ENCODE measurements at regions of chr9 and their contacts with region 1.

Region 1: DNA sequence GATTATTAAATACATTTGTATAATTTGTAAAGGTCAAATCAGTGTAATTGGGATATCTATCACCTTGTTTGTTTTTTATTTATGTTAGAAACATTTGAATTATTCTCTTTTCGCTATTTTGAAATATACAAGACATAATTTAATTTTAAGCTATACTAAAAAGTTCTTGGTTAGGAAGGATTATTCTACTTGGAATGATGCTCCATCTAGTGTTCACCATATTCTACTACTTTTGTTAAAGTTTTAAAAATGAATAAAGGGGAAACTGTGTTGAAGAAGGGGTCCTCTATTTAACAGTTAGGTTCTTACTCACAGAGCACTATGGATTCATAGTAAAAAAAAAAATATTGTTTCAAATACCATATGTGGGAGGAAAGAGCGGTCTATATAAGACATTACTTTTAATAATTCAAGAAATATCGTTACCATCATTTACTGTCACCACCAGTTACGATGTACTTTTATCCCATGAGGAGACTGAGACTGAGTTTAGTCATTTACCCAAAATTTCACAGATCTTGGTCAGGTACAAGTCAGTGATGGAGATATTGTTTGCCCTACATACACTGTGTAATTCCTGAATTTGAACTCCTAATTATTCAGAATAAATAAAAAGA is 6.3 kb upstream of the STOM start:
- DNase-seq: peak; percentile 34
- ATAC-seq: no peak
- H3K4me3 ChIP-seq: no peak overlapping the region
- H3K27ac ChIP-seq: no peak overlapping the region
- H3K4me1 ChIP-seq: peaks cover 38% of the 10 kb centered on the region
- H3K27me3 ChIP-seq: no peaks in the 10 kb centered on the region
- CTCF ChIP-seq: peak; percentile 66

Region 2: DNA sequence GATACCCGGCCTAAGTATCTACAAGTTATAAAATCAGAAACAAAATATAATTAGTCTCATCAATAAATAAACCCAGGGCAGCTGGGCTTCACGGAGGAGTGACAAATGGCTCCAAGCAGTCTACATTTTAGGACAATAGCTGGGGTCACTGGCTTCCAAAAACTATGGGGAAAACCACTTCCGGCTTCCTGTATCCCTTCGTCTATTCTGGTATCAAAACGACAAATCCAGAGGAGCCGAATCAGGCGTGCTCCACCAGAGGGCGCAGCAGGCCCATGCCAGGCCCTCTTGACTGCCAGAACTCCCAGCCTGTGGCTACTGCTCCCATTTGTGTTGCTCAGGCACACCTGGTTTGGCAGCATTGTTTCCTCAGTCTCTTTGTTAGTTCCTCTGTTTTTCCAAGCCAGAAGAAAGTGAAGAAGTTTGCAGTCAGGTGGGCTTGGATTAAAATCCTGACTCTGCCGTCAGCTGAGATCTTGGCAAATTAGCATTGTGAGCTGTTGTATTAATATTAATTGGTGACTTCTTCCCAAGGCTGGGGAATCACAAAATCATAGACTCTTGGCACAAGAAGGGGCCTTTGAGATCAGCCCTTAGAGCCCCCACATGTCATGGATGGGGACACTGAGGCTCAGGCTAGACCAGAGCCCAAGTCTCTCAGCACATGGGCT is 163.1 kb before region 1 on chr9:
- CTCF ChIA-PET with region 1: interaction called, 3 read pairs
- POLR2A ChIA-PET with region 1: no interaction called
- intact Hi-C with region 1: loop called (anchors 1 kb)
- DNase-seq: peak; percentile 87
- ATAC-seq: peak; percentile 99
- H3K4me3 ChIP-seq: no peak overlapping the region
- H3K27ac ChIP-seq: no peak overlapping the region
- H3K4me1 ChIP-seq: no peaks in the 10 kb centered on the region
- H3K27me3 ChIP-seq: no peaks in the 10 kb centered on the region
- CTCF ChIP-seq: peak; percentile 93

Region 3: DNA sequence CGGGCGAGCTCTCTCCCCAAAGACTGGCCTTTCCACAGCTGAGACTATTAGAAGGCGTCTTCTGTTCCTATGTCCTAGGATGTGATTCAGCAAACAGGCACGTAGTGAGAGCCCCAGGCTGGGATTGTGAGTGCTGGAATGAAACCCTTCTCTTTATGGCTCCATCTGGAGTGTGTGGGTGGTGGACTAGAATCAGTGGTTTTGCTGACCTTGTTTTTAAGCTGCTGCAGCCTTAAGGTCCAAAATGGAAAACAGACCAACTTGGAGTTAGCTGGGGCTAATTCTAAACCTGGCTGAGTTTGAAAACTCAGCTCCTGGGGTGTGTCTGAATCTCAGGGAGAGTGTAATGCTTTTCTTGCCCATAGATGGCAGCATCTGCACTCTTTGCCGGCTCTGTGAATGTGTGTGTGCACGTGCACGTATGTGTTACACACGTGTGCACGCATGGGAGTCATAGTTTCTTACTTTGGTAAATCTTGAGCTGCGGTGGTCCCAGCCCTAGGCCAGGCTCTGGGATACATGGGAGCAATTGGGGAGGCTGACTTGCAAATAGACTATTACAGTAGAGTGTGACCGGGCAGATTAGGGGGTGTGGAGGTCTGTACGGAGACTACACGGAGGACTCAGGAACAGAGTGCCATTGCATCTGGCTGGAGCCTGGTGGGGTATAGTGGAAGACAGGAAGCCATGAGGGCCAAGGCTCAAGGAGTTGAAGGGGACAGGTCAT is 97.6 kb before region 1 on chr9:
- CTCF ChIA-PET with region 1: no interaction called
- POLR2A ChIA-PET with region 1: no interaction called
- intact Hi-C with region 1: loop called (anchors 2 kb)
- DNase-seq: peak; percentile 87
- ATAC-seq: peak; percentile 66
- H3K4me3 ChIP-seq: 0 out of 2 replicates have a peak overlapping the region, but pooled peaks have one; percentile 10
- H3K27ac ChIP-seq: peak overlapping the region; percentile 71
- H3K4me1 ChIP-seq: peaks cover 59% of the 10 kb centered on the region
- H3K27me3 ChIP-seq: no peaks in the 10 kb centered on the region
- CTCF ChIP-seq: peak; percentile 79

Region 4: DNA sequence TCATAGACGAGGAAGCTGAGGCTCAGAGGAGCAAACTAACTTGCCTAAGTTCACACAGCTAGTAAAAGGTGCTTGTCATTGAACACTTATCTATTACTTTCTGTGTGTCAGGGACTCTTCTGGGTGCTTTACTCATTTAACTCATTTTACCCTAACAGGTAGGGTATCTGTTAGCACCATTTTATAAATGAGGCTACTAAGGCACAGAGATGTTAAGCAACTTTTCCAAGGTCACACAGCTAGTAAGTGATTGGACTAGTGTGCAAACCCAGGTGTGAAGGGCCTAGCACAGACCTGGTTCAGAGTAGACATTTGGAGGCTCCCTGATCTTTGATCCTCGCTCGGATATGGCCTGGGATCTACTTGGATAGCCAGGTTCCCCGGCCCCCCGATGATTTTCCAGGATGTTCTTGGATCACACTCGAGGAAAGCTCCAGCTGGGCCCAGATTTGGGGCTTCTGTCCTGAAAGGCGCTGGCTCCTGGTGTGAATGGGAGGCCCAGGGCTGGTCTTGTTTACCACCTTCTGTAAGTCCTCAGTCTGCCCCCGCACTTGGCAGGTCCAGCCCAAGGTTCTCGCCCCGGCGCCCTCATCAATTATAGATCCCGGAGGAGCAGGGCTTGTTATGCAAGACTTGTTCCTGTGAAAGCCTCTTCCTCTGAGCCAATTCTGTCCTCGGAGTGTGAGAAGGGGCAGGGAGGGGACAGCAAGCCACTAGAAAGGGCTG is 70.9 kb before region 1 on chr9:
- CTCF ChIA-PET with region 1: no interaction called
- POLR2A ChIA-PET with region 1: no interaction called
- intact Hi-C with region 1: no loop called
- DNase-seq: no peak
- ATAC-seq: no peak
- H3K4me3 ChIP-seq: no peak overlapping the region
- H3K27ac ChIP-seq: no peak overlapping the region
- H3K4me1 ChIP-seq: no peaks in the 10 kb centered on the region
- H3K27me3 ChIP-seq: no peaks in the 10 kb centered on the region
- CTCF ChIP-seq: no peak

Region 5: DNA sequence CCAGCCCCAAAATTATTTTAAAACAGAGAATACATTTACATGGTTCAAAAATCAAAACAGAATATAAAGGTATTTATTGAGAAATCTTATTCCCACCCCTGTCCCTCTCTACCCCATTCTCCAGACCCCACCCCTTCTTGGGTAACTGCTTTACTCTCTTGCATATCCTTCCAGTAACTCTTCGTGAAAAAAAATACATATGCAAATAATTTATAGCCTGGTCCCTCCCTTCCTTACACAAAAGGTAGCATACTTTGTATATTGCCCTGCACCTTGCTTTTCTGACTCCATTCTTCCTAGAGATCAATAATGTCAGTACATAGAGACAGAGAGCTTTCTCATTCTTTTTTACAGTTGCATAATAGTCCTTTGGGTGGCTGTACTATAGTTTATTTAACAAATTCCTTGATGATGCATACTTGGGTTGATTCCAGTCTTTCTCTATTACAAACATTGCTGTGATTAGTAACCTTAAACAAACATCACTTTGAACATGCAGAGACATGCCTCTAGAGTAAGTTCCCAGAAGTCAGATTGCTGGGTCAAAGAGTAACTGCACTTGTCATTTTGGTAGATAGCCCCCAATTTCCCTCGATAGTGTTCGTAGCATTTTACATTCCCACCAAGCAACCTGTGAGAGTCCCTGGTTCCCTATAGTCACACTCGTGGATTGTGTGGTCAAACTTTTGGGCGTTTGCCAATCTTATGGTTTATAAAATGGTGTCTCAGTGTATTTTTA is 54.1 kb before region 1 on chr9:
- CTCF ChIA-PET with region 1: interaction called, 10 read pairs
- POLR2A ChIA-PET with region 1: no interaction called
- intact Hi-C with region 1: loop called (anchors 1 kb)
- DNase-seq: peak; percentile 94
- ATAC-seq: peak; percentile 75
- H3K4me3 ChIP-seq: peak overlapping the region; percentile 46; the same call in 1 of the 2 replicates
- H3K27ac ChIP-seq: peak overlapping the region; percentile 91
- H3K4me1 ChIP-seq: peaks cover 8% of the 10 kb centered on the region
- H3K27me3 ChIP-seq: no peaks in the 10 kb centered on the region
- CTCF ChIP-seq: no peak

Region 6: GRCh38 chr9:121357011-121357410 is 19.3 kb before region 1 on chr9:
- CTCF ChIA-PET with region 1: no interaction called
- POLR2A ChIA-PET with region 1: interaction called, 3 read pairs
- intact Hi-C with region 1: loop called (anchors 2 kb)
- DNase-seq: no peak
- ATAC-seq: peak; percentile 56
- H3K4me3 ChIP-seq: peak overlapping the region; percentile 44; the same call in 1 of the 2 replicates
- H3K27ac ChIP-seq: peak overlapping the region; percentile 57
- H3K4me1 ChIP-seq: peaks cover 19% of the 10 kb centered on the region
- H3K27me3 ChIP-seq: no peaks in the 10 kb centered on the region
- CTCF ChIP-seq: no peak

Region 7: DNA sequence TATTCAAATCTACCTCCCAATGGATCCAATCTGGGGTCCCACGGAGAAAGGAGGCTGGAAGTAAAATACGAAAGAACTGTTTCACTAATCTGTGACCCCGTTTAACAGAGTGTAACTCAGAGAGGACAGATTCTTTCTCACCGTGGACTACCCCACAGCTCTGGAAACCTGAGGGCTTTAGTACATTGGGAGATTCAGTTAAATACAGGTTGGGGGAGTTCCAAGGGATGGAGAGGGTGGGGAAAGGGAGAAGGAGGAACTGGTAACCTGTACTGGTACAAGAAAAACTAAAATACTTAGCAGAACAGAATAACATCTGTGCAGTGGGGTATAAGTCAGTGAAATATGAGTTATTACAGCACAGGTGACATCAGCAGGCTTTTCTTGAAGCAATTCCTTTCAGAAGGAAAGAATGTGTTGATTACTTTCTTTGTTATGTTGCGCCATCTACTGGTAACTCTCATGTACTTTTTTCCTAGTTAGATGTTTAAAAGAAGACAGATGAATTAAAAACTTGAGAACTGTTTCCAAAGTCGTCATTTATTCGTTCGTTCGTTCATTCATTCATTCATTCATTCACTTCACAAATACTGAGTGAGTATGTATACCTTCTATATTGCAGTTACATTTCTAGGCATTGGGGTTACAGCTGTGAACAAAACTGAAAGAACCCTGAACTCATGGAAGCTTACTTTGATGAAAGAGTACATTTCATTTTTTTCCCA is 23.7 kb after region 1 on chr9:
- CTCF ChIA-PET with region 1: interaction called, 3 read pairs
- POLR2A ChIA-PET with region 1: interaction called, 3 read pairs
- intact Hi-C with region 1: loop called (anchors 2 kb)
- DNase-seq: peak; percentile 79
- ATAC-seq: peak; percentile 53
- H3K4me3 ChIP-seq: no peak overlapping the region
- H3K27ac ChIP-seq: no peak overlapping the region
- H3K4me1 ChIP-seq: no peaks in the 10 kb centered on the region
- H3K27me3 ChIP-seq: no peaks in the 10 kb centered on the region
- CTCF ChIP-seq: peak; percentile 72

Measured in PC-3 (cell line).